H1 (cell line): ENCODE measurements at regions of chr1 and their contacts with region 1.

Region 1: DNA sequence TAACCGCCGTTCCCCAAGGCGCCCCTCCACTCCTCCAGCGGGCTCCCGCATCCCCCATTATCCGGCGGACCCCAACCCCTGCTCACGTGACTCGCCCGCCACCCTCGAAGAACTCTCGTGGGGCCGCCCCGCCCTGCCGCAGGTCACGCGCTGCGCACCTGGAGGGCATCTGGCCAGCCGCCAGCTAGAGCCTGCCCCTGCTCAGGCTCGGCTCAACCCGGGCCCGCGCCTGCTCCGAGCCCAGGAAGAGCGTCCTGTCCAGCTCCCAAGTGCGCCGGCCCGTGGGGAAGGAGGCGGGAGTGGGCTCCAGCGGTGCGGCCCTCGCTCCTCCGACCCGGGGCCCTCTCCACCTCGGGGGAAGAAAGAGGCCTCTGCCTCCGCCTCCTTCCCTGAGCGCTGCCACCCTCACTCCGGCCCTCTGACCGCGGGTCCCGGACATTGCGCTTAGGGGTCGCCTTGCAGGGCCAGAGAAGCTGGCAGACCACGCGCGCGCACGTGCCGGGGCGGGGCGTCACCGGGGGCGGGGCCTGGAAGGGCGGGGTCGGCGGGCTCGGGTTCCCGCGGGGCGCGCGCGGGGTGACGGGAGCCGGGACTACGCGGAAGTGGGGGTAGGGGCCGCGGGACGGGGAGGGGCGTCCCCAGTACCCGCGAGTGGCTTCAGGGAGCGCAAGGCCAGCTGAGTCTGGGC is 28.4 kb downstream of the HMGN2 start:
- DNase-seq: peak; percentile 25 to 98
- H3K4me3 ChIP-seq: peak overlapping the region; percentile 60 to 76 (median 68)
- H3K27ac ChIP-seq: peak overlapping the region; percentile 43; the same call in 1 of the 2 replicates
- H3K4me1 ChIP-seq: no peaks in the 10 kb centered on the region
- H3K27me3 ChIP-seq: no peaks in the 10 kb centered on the region
- CTCF ChIP-seq: no peak
- EP300 ChIP-seq: no peak
- POLR2A ChIP-seq: no peak; a peak in 1 of 3 replicates
- RAD21 ChIP-seq: no peak

Region 2: GRCh38 chr1:26459573-26460031 is 41.0 kb before region 1 on chr1:
- CTCF ChIA-PET with region 1: no interaction called
- POLR2A ChIA-PET with region 1: no interaction called
- DNase-seq: no peak
- H3K4me3 ChIP-seq: no peak overlapping the region
- H3K27ac ChIP-seq: no peak overlapping the region
- H3K4me1 ChIP-seq: no peaks in the 10 kb centered on the region
- H3K27me3 ChIP-seq: no peaks in the 10 kb centered on the region
- CTCF ChIP-seq: no peak
- EP300 ChIP-seq: no peak
- POLR2A ChIP-seq: no peak
- RAD21 ChIP-seq: no peak

Region 3: DNA sequence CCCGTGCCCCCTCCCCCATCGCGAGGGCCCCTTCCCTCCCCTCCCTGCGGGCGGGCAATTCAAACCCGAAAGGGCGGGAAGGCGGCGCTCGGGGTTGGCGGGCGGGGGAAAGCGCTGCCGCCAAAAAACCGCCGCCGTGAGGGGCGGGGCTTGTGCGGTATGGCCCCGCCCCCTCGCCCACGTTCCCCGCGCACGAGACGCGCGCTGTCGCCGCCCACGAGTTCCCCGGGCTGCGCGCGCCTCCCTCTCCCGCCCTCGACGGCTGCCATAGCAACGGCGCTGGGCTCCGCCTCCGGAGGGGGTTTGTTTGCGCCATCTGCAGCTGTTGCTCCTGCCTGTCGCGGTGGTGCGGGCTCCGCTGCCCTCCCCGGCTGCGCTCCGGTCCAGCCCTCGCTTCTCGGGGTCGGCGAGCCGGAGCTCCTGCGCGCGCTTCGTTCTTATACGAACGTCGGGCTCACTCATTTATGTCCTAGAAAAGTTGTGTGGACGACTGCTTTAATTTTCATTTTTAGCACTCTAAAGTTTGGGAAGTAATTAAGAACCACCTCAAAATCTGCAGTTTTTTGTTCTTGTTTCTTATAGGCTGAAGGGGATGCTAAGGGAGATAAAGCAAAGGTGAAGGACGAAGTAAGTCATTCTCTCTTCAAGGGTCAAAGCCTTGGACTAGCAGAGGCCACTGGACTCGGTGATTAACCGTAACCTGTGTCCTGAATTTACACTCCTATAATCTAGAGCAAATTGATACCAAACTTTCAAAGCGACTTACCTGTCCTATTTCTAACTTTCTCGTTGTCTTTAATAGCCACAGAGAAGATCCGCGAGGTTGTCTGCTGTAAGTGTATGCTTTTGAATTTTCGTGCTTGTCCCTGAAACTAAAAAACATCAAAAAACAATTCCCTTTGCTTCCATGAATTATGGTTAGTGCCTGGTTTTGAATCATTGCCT is 27.5 kb before region 1 on chr1:
- CTCF ChIA-PET with region 1: interaction called, 16 read pairs
- POLR2A ChIA-PET with region 1: interaction called, 38 read pairs
- DNase-seq: peak; percentile 74 to 95
- H3K4me3 ChIP-seq: peak overlapping the region; percentile 71 to 96 (median 82)
- H3K27ac ChIP-seq: peak overlapping the region; percentile 99; the same call in 1 of the 2 replicates
- H3K4me1 ChIP-seq: peaks cover 8 to 13% (median 11%) of the 10 kb centered on the region in 4 experiments
- H3K27me3 ChIP-seq: peaks cover 0 to 4% (median 0%) of the 10 kb centered on the region in 4 experiments; a peak in 2 of 7 replicates
- CTCF ChIP-seq: no peak
- EP300 ChIP-seq: no peak
- POLR2A ChIP-seq: peak in 1 of 2 experiments; percentile 8; a peak in 1 of 3 replicates
- RAD21 ChIP-seq: no peak

Region 4: DNA sequence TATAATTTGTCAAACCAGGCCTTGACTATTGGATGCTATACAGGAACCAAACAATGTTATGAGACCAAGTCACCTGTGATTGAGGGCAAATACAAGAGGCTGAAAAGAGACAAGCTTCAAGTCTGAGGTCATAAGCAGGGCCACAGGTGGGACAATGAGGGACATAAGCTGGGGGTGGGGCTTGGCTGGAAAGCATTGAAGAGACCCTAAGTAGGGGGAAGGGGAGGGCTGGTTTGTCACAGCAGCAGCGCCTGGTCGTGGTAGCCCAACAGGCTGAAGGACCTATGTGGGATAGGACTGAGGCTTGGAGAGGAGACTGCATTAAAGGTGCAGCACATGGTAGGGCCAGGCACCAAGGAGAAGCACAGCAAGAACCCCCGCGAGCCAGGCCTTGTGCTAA is 10.5 kb before region 1 on chr1:
- CTCF ChIA-PET with region 1: interaction called, 21 read pairs
- POLR2A ChIA-PET with region 1: interaction called, 7 read pairs
- DNase-seq: no peak
- H3K4me3 ChIP-seq: no peak overlapping the region
- H3K27ac ChIP-seq: no peak overlapping the region
- H3K4me1 ChIP-seq: no peaks in the 10 kb centered on the region; a peak in 1 of 7 replicates
- H3K27me3 ChIP-seq: no peaks in the 10 kb centered on the region
- CTCF ChIP-seq: no peak
- EP300 ChIP-seq: no peak
- POLR2A ChIP-seq: no peak
- RAD21 ChIP-seq: no peak

Region 5: DNA sequence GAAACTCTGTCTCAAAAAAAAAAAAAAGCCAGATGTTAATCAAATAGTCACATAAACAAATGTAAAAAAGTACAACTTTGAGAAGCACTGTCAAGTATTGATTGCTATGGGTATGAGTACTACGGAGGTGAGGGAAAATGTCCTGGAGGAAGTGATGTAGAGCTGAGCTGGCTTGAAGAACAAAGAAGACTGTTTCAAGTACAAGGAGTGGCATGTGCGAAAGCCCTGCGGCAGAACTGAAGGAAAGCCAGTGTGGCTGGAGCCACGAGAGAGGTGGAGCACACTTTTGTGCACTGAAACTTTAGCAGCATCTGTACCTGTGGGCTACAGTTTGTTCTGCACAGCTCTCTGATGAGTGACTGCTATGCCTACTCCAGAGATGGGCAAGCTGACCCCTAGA is 23.5 kb after region 1 on chr1:
- CTCF ChIA-PET with region 1: interaction called, 19 read pairs
- POLR2A ChIA-PET with region 1: interaction called, 48 read pairs
- DNase-seq: no peak
- H3K4me3 ChIP-seq: no peak overlapping the region
- H3K27ac ChIP-seq: no peak overlapping the region
- H3K4me1 ChIP-seq: peaks cover under 1 to 3% (median 2%) of the 10 kb centered on the region in 4 experiments; a peak in 3 of 7 replicates
- H3K27me3 ChIP-seq: no peaks in the 10 kb centered on the region
- CTCF ChIP-seq: no peak
- EP300 ChIP-seq: no peak
- POLR2A ChIP-seq: no peak
- RAD21 ChIP-seq: no peak

Region 6: DNA sequence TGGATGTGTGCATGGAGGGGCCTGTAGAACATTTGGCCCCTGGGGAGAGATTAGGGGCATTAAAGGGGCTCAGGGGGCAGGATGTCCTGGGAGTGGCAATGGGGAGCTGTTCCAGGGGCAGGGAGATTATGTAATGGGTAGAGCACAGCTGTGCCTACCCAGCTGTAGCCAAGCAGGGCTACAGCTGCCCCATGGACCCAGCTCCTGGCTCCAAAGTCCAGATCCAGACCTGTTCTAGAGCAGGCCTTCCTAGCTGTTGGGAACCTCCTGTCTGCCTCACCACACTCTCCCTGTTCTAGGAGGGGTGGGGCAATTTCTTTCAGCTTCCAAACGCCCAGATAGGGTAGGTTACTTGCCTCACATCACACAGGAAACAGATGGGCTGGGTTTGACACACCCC is 34.6 kb after region 1 on chr1:
- CTCF ChIA-PET with region 1: interaction called, 27 read pairs
- POLR2A ChIA-PET with region 1: interaction called, 48 read pairs
- DNase-seq: no peak
- H3K4me3 ChIP-seq: no peak overlapping the region
- H3K27ac ChIP-seq: no peak overlapping the region
- H3K4me1 ChIP-seq: peaks cover 8 to 17% (median 16%) of the 10 kb centered on the region in 4 experiments
- H3K27me3 ChIP-seq: no peaks in the 10 kb centered on the region
- CTCF ChIP-seq: no peak
- EP300 ChIP-seq: no peak
- POLR2A ChIP-seq: no peak
- RAD21 ChIP-seq: no peak

Region 7: DNA sequence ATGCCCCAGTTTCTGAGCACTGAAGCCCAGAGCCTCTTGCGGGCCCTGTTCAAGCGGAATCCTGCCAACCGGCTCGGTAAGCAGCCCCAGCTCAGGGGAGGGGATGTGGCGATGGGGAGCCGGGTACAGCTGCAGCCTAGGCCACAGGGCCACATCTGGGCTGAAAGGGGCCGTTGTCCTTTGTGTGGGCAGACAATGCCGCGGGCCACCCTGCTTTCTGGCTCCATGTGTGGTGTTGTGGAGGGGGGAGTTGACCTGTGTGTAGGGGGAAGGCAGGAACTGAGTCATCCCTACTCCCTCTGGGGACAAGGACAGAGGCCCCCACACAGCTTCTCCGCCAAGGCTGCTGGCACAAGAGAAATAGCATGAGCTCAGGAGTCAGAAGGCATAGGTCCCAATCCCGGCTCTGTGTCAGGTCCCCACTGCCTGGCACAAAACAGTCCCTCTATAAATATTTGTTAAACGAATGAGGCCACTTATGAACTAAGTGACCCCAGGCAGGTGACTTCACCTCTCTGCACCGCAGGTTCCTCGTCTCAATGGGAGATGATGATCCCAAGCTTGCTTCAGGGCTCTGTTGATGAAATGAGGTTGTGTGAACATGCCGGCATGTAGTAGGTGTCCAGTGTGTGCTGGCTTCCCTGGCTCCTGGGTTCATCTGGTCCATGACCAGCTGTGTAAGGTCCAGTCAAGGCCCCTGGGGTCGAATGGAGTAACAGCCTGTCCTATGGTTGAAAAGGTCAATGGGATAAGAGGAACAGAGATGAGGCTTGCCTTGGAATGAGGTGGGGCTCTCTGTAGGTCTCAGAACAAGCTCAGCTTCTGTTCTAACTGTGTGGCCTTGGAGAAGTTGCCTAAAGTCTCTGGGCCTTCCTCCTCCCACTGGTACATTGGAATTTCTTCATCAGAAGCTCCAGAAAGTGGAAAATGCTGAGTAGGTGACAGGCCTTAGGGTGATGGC is 55.2 kb after region 1 on chr1:
- CTCF ChIA-PET with region 1: no interaction called
- POLR2A ChIA-PET with region 1: no interaction called
- DNase-seq: no peak
- H3K4me3 ChIP-seq: no peak overlapping the region
- H3K27ac ChIP-seq: no peak overlapping the region
- H3K4me1 ChIP-seq: no peaks in the 10 kb centered on the region
- H3K27me3 ChIP-seq: no peaks in the 10 kb centered on the region; a peak in 1 of 7 replicates
- CTCF ChIP-seq: no peak
- EP300 ChIP-seq: no peak
- POLR2A ChIP-seq: no peak
- RAD21 ChIP-seq: no peak